ENCODE measurements at regions of chr12 and their contacts with region 1.

Region 1: GRCh38 chr12:55973598-55974307 is at the start of gene RAB5B:
- DNase-seq: peak; percentile 100
- ATAC-seq: peak; percentile 96
- H3K4me3 Mint-ChIP-seq: no peak within 1 kb of the TSS
- H3K27ac Mint-ChIP-seq: no peak within 1 kb of the TSS
- H3K4me1 Mint-ChIP-seq: peaks cover 17% of the 10 kb centered on the region
- H3K27me3 Mint-ChIP-seq: no peaks in the 10 kb centered on the region
- total RNA-seq, gene RAB5B: 51.9 to 52.9 TPM

Region 2: GRCh38 chr12:55829967-55830600 is 143.7 kb before region 1 on chr12:
- CTCF ChIA-PET with region 1: no interaction called
- POLR2A ChIA-PET with region 1: interaction called, 10 read pairs
- DNase-seq: peak; percentile 55
- ATAC-seq: peak; percentile 35
- H3K4me3 Mint-ChIP-seq: peak overlapping the region; percentile 99
- H3K27ac Mint-ChIP-seq: peak overlapping the region; percentile 97
- H3K4me1 Mint-ChIP-seq: peaks cover 41% of the 10 kb centered on the region
- H3K27me3 Mint-ChIP-seq: no peaks in the 10 kb centered on the region

Region 3: GRCh38 chr12:55874443-55874842 is 99.3 kb before region 1 on chr12:
- CTCF ChIA-PET with region 1: no interaction called
- POLR2A ChIA-PET with region 1: no interaction called
- DNase-seq: no peak
- ATAC-seq: no peak
- H3K4me3 Mint-ChIP-seq: no peak overlapping the region
- H3K27ac Mint-ChIP-seq: no peak overlapping the region
- H3K4me1 Mint-ChIP-seq: no peaks in the 10 kb centered on the region
- H3K27me3 Mint-ChIP-seq: no peaks in the 10 kb centered on the region

Region 4: GRCh38 chr12:55955800-55956508 is 17.8 kb before region 1 on chr12:
- CTCF ChIA-PET with region 1: interaction called, 7 read pairs
- POLR2A ChIA-PET with region 1: interaction called, 20 read pairs
- DNase-seq: peak; percentile 63
- ATAC-seq: peak; percentile 78
- H3K4me3 Mint-ChIP-seq: no peak overlapping the region
- H3K27ac Mint-ChIP-seq: peak overlapping the region; percentile 41
- H3K4me1 Mint-ChIP-seq: peaks cover 2% of the 10 kb centered on the region
- H3K27me3 Mint-ChIP-seq: no peaks in the 10 kb centered on the region

Region 5: DNA sequence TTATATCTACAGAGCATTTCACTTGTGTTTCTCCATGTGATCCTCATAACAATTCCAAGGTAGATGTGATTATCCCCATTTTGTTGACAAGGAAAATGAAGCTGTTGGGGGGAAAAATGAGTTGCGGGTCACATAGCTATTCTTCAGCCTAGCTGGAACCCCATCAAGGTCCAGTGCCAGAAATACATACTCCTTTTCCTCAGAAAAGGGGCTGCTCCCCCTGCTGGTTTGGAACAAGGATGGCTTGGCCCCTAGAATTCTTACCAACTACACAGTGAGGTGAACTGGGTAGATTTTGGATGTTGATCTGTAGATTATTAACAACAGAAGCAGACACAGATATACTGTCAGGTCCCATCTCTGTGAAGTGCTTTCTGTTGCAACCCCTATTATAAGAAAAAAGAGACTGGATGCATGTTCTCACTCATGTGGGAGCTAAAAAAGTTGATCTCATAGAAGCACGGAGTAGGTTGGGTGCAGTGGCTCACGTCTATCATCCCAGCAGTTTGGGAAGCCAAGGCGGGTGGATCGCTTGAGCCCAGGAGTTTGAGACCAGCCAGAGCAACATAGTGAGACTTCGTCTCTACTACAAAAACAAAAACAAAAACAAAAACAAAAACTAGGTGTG is 56.0 kb after region 1 on chr12:
- CTCF ChIA-PET with region 1: interaction called, 17 read pairs
- POLR2A ChIA-PET with region 1: no interaction called
- DNase-seq: peak; percentile 64
- ATAC-seq: peak; percentile 64
- H3K4me3 Mint-ChIP-seq: no peak overlapping the region
- H3K27ac Mint-ChIP-seq: peak overlapping the region; percentile 8
- H3K4me1 Mint-ChIP-seq: peaks cover 54% of the 10 kb centered on the region
- H3K27me3 Mint-ChIP-seq: no peaks in the 10 kb centered on the region